Dorsolateral prefrontal cortex (tissue), 120 donors: ENCODE measurements at regions of chr6 and their contacts with region 1.

Region 1: DNA sequence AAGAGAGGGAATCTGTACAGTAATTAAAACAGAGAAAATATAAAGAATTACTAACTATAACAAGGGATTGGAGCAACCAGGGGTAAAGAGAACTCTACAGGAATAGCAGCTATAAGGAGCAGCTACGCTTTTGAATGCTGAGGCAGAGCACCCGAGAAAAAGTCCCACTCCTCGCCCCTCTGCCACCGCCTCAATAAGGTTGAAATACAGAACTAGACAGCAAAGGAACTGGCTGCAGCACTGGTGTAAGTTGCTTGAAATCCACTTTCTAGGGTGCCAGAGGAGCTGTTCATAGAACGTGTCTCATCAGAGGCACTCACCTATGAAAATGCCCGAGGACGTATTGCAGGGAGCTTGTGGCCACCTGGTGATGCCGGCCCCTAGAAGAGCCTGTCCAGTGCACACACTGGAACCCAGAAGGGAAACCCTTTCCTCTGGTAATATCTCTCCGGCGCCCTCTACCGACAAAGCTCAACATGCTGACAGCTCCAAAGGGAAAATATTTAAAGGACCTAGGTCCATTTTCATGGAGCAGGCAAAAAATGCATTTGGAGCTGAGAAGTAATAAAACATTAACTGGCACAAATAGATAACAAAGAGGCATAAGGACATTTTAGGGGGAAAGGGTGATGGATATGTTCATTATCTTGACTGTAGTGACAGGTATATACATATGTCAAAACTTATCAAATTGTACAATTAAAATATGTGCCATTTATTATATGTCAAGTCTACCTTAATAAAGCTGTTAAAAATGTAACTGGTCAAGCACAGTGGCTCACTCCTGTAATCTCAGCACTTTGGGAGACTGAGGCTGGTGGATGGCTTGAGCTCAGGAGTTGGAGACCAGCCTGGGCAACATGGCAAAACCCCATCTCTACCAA is 137.4 kb upstream of the HDAC2 start:
- DNase-seq: peak; percentile 23 to 89 (median 75)
- H3K4me3 ChIP-seq: peak overlapping the region in 23 of 59 donors; percentile 2 to 46 (median 21)
- H3K27ac ChIP-seq: peak overlapping the region in 51 of 59 donors; percentile 9 to 83 (median 58)
- H3K27me3 ChIP-seq: no peaks in the 10 kb centered on the region
- CTCF ChIP-seq: peak; percentile 24 to 82 (median 69)

Region 2: GRCh38 chr6:114157848-114158247 is 49.5 kb after region 1 on chr6:
- intact Hi-C with region 1: loop called in 1 of 2 experiments (anchors 10 kb)
- DNase-seq: no peak
- H3K4me3 ChIP-seq: no peak overlapping the region
- H3K27ac ChIP-seq: no peak overlapping the region
- H3K27me3 ChIP-seq: no peaks in the 10 kb centered on the region
- CTCF ChIP-seq: no peak

Region 3: DNA sequence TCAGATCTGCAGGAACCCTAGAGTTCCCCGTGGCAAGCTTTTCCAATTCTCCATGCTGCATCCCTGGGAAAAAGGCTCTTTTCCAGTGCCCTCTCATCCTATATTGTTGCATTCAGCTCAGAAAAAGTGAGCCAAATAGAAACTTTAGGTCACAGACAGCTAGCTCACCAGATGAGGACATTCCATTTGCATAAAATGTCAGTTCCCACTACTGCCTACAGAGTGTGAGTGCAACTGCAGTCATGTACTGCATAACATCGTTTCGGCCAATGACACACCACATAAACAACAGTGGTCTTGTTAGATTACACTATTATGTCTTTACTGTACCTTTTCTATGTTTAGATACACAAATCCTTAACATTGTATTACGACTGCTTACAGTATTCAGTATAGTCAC is 225.9 kb after region 1 on chr6:
- intact Hi-C with region 1: no loop called
- DNase-seq: no peak
- H3K4me3 ChIP-seq: no peak overlapping the region
- H3K27ac ChIP-seq: peak overlapping the region in 29 of 59 donors; percentile 0 to 68 (median 25)
- H3K27me3 ChIP-seq: no peaks in the 10 kb centered on the region
- CTCF ChIP-seq: peak in 3 of 56 donors; percentile 16 to 25 (median 20)